ENCODE measurements at regions of chr5 and their contacts with region 1.

Region 1: GRCh38 chr5:16791036-16791705 is 144.9 kb downstream of the MYO10 start:
- DNase-seq: no peak

Region 2: GRCh38 chr5:16809395-16810207 is 18.4 kb after region 1 on chr5:
- intact Hi-C with region 1: no loop called
- DNase-seq: no peak

Region 3: DNA sequence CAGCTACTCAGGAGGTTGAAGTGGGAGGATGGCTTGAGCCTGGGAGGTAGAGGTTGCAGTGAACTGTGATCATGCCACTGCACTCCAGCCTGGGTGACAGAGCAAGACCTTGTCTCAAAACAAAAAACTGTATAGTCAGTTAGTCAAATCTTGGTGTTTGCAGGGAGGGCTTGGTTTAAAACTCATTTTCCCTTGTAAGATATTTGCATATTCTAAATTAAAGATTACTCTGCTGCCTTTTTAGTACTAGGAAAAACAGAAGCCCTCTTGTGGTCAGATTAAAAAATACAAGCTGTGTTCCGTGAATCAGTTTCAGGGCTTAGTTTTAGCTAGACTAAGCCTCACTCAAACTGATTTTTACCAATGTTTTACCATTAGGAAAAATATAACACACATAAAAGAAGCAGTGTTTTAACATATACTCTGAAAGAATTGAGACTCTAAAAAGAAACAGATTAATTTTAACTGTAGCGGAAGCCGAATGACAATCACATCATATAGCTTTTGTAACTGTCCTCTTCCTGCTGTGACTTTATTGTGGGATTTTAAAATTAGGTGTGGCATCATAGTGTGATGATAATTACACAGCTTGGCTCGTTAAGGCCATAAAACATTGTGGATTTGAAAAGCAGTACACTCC is 341.4 kb after region 1 on chr5:
- intact Hi-C with region 1: loop called (anchors 2 kb)
- DNase-seq: no peak

Region 4: GRCh38 chr5:17189381-17190036 is 398.3 kb after region 1 on chr5:
- intact Hi-C with region 1: loop called (anchors 2 kb)
- DNase-seq: no peak